Naive thymus-derived CD4-positive, alpha-beta T cell (primary cell): ENCODE measurements at regions of chr3 and their contacts with region 1.

Region 1: GRCh38 chr3:60064210-60065178 is 1014.7 kb upstream of the CFAP20DC start:
- DNase-seq: peak in 3 of 9 donors; percentile 48 to 52 (median 48)
- ATAC-seq: peak; percentile 77
- H3K4me3 ChIP-seq: peak overlapping the region; percentile 25
- H3K4me3 Mint-ChIP-seq: peak overlapping the region; percentile 5 to 81 (median 74)
- H3K27ac ChIP-seq: peak overlapping the region; percentile 71
- H3K27ac Mint-ChIP-seq: peak overlapping the region; percentile 88 to 99 (median 96)
- H3K4me1 ChIP-seq: peaks cover 17 to 68% of the 10 kb centered on the region in 2 donors
- H3K4me1 Mint-ChIP-seq: peaks cover 28 to 96% (median 87%) of the 10 kb centered on the region in 7 donors
- H3K27me3 ChIP-seq: no peaks in the 10 kb centered on the region
- H3K27me3 Mint-ChIP-seq: no peaks in the 10 kb centered on the region

Region 2: GRCh38 chr3:60017631-60018030 is 46.9 kb before region 1 on chr3:
- CTCF ChIA-PET with region 1: interaction called, 3 read pairs
- POLR2A ChIA-PET with region 1: interaction called, 62 read pairs
- intact Hi-C with region 1: loop called (anchors 1 to 5 kb)
- DNase-seq: peak in 8 of 9 donors; percentile 58 to 88 (median 76)
- ATAC-seq: peak; percentile 92
- H3K4me3 ChIP-seq: peak overlapping the region; percentile 15
- H3K4me3 Mint-ChIP-seq: peak overlapping the region; percentile 53 to 88 (median 74)
- H3K27ac ChIP-seq: peak overlapping the region; percentile 66
- H3K27ac Mint-ChIP-seq: peak overlapping the region; percentile 91 to 99 (median 94)
- H3K4me1 ChIP-seq: peaks cover 37 to 60% of the 10 kb centered on the region in 2 donors
- H3K4me1 Mint-ChIP-seq: peaks cover 29 to 100% (median 88%) of the 10 kb centered on the region in 7 donors
- H3K27me3 ChIP-seq: no peaks in the 10 kb centered on the region
- H3K27me3 Mint-ChIP-seq: no peaks in the 10 kb centered on the region

Region 3: DNA sequence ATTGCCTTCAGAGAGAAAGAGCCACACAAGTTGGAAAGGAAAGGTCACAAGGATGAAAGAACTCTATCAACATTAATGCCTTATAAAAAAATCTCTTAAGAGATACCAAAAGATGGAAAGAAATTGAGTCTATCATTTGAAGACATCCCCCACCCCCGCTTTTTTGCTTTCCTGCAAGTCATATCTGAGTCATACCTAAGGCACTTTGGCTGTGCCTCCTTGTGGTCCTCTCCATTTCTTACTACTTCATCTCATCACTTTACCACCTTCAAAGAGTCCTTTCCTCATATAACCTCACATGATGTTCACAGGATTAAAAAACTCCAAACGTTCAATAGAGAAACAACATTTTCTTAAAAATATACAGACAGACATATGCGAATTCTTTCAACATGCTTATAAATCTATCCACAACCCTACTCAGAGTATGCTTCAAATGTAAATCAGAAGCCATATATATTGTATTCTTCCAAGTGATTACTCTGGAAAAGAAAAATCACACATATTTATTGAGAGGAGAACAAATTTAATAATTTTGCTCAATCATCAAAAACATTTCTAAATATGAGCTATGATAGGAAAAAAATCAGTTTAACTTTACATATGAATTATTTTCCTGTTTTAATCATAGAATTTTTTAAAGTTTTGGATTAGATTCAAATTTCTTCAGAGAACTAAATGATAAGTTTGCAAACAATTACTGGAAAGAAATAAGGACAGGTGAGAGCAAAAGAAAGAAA is 10.8 kb before region 1 on chr3:
- CTCF ChIA-PET with region 1: interaction called, 4 read pairs
- POLR2A ChIA-PET with region 1: interaction called, 45 read pairs
- intact Hi-C with region 1: loop called (anchors 1 kb)
- DNase-seq: peak in 1 of 9 donors; percentile 55
- ATAC-seq: no peak
- H3K4me3 ChIP-seq: no peak overlapping the region
- H3K4me3 Mint-ChIP-seq: peak overlapping the region; percentile 7 to 78 (median 51)
- H3K27ac ChIP-seq: peak overlapping the region; percentile 5
- H3K27ac Mint-ChIP-seq: peak overlapping the region; percentile 77 to 99 (median 90)
- H3K4me1 ChIP-seq: peaks cover 3 to 73% of the 10 kb centered on the region in 2 donors
- H3K4me1 Mint-ChIP-seq: peaks cover 36 to 95% (median 92%) of the 10 kb centered on the region in 7 donors
- H3K27me3 ChIP-seq: no peaks in the 10 kb centered on the region
- H3K27me3 Mint-ChIP-seq: no peaks in the 10 kb centered on the region

Region 4: GRCh38 chr3:60076331-60076730 is 11.8 kb after region 1 on chr3:
- CTCF ChIA-PET with region 1: interaction called, 8 read pairs
- POLR2A ChIA-PET with region 1: interaction called, 213 read pairs
- intact Hi-C with region 1: loop called (anchors 1 kb)
- DNase-seq: no peak
- ATAC-seq: no peak
- H3K4me3 ChIP-seq: peak overlapping the region; percentile 44
- H3K4me3 Mint-ChIP-seq: peak overlapping the region; percentile 64 to 97 (median 86)
- H3K27ac ChIP-seq: peak overlapping the region; percentile 86
- H3K27ac Mint-ChIP-seq: peak overlapping the region; percentile 78 to 98 (median 93)
- H3K4me1 ChIP-seq: peaks cover 7 to 45% of the 10 kb centered on the region in 2 donors
- H3K4me1 Mint-ChIP-seq: peaks cover 12 to 72% (median 64%) of the 10 kb centered on the region in 7 donors
- H3K27me3 ChIP-seq: no peaks in the 10 kb centered on the region
- H3K27me3 Mint-ChIP-seq: no peaks in the 10 kb centered on the region

Region 5: DNA sequence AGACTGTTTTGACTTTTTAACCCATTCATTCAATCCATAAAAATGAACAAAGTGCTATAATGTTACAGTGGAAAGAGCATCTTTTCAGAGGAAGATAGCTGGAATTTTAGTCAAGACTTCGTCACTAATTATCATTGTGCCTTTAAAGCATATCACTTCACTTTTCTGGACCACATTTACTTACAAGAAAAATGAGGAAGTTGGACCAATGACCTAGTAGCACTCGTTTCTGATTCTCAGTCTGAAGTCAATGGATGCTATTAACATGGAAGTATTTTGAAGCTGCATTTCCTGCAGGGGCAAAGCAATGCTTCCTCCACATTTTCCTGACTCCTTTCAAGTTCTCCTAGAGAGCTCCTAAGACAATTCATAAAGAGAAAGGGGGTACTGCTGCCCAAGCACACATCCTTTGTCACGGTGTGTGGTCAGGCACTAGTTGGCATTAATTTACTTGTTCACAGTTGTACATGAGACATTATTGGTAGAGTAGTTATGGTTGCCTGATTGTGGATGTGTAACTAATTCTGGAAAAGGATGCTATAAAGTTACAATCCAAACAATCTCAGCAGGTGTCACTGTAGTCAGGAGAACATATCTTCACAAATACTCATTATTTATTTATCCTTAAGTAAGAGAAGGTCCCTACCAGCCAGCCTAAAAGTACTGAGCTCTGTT is 137.7 kb after region 1 on chr3:
- CTCF ChIA-PET with region 1: no interaction called
- POLR2A ChIA-PET with region 1: no interaction called
- intact Hi-C with region 1: no loop called
- DNase-seq: no peak
- ATAC-seq: no peak
- H3K4me3 ChIP-seq: no peak overlapping the region
- H3K4me3 Mint-ChIP-seq: no peak overlapping the region
- H3K27ac ChIP-seq: no peak overlapping the region
- H3K27ac Mint-ChIP-seq: no peak overlapping the region
- H3K4me1 ChIP-seq: no peaks in the 10 kb centered on the region
- H3K4me1 Mint-ChIP-seq: peaks cover 0 to 6% (median 0%) of the 10 kb centered on the region in 7 donors
- H3K27me3 ChIP-seq: no peaks in the 10 kb centered on the region
- H3K27me3 Mint-ChIP-seq: no peaks in the 10 kb centered on the region